ENCODE measurements at regions of chr12 and their contacts with region 1.

Region 1: GRCh38 chr12:121626087-121626852 is at the start of gene ORAI1:
- DNase-seq: peak; percentile 96
- H3K4me3 Mint-ChIP-seq: peak within 1 kb of the TSS; percentile 92
- H3K27ac Mint-ChIP-seq: peak within 1 kb of the TSS; percentile 95
- H3K4me1 Mint-ChIP-seq: peaks cover 49% of the 10 kb centered on the region
- H3K27me3 Mint-ChIP-seq: no peaks in the 10 kb centered on the region
- total RNA-seq, gene ORAI1: 61.5 and 67.0 TPM in 2 replicates

Region 2: DNA sequence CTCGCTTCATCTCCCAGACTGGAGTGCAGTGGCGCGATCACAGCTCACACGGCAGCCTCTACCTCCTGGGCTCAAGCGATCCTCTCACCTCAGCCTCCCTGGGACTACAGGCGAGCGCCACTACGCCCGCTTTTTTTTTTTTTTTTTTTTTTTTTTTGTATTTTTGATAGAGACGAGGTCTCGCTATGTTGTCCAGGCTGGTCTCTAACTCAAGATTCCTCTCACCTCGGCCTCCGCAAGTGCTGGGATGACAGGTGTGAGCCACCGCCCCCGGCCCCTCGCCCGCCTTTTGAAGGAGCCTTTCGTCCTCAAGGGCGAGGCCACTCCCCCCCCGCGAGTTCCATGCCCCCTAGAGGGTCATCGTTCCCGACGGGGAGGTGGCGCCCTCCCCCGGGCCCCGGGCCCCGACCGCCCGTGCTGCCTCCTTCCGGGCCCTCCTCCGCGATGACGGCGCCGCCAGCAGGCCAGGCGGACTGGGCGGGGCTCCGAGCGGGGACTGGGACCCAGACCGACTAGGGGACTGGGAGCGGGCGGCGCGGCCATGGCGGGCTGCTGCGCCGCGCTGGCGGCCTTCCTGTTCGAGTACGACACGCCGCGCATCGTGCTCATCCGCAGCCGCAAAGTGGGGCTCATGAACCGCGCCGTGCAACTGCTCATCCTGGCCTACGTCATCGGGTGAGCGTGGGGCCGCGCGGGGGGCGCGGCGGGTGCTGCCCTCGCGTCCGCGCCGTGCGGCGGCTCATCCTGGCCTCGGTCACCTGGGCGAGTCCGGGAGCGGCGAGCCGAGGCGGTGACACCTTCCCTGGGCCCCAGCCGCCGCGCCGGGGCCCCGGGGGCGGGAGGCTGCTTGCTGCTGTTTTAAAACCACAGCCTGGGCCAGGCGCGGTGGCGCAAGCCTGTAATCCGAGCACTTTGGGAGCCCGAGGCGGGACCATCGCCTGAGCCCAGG is 416.4 kb before region 1 on chr12 and contains the start of gene P2RX4:
- intact Hi-C with region 1: loop called (anchors 5 kb)
- DNase-seq: peak; percentile 87
- H3K4me3 Mint-ChIP-seq: peak within 1 kb of the TSS; percentile 85
- H3K27ac Mint-ChIP-seq: peak within 1 kb of the TSS; percentile 94
- H3K4me1 Mint-ChIP-seq: peaks cover 33% of the 10 kb centered on the region
- H3K27me3 Mint-ChIP-seq: peaks cover 1% of the 10 kb centered on the region
- total RNA-seq, gene P2RX4: 22.8 and 25.3 TPM in 2 replicates

Region 3: GRCh38 chr12:121467115-121467793 is 159.0 kb before region 1 on chr12:
- intact Hi-C with region 1: loop called (anchors 1 kb)
- DNase-seq: peak; percentile 88
- H3K4me3 Mint-ChIP-seq: no peak overlapping the region
- H3K27ac Mint-ChIP-seq: no peak overlapping the region
- H3K4me1 Mint-ChIP-seq: peaks cover 29% of the 10 kb centered on the region
- H3K27me3 Mint-ChIP-seq: peaks cover 8% of the 10 kb centered on the region

Region 4: DNA sequence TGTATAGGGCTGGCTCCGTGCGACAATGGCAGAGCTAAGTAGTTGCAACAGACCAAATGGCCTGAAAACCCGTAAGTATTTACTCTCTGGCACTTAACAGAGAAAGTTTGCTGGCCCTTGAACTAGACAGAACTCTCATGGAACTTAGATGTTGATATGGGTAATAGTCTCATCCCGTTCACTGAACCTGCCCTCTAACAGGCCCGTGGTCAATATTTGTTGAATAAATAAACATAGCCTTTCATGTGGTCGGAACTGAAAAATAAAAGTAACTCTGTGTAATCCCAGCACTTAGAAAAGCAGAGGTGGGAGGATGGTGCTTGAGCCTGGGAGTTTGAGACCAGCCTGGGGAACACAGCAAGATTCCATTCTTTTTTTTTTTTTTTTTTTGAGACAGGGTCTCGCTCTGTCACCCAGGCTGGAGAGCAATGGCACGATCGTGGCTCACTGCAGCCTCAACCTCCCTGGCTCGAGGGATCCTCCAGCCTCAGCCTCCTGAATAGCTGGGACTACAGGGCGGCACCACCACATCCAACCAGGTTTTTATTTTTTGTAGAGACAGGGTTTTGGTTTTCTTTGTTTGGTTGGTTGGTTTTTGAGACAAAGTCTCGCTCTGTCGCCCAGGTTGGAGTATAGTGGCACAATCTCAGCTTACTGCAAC is 75.2 kb before region 1 on chr12:
- intact Hi-C with region 1: loop called (anchors 1 kb)
- DNase-seq: no peak
- H3K4me3 Mint-ChIP-seq: no peak overlapping the region
- H3K27ac Mint-ChIP-seq: no peak overlapping the region
- H3K4me1 Mint-ChIP-seq: peaks cover 6% of the 10 kb centered on the region
- H3K27me3 Mint-ChIP-seq: no peaks in the 10 kb centered on the region

Region 5: GRCh38 chr12:121657305-121658008 is 31.2 kb after region 1 on chr12:
- intact Hi-C with region 1: loop called (anchors 1 kb)
- DNase-seq: peak; percentile 15
- H3K4me3 Mint-ChIP-seq: peak overlapping the region; percentile 26
- H3K27ac Mint-ChIP-seq: peak overlapping the region; percentile 71
- H3K4me1 Mint-ChIP-seq: peaks cover 57% of the 10 kb centered on the region
- H3K27me3 Mint-ChIP-seq: peaks cover 5% of the 10 kb centered on the region

Region 6: DNA sequence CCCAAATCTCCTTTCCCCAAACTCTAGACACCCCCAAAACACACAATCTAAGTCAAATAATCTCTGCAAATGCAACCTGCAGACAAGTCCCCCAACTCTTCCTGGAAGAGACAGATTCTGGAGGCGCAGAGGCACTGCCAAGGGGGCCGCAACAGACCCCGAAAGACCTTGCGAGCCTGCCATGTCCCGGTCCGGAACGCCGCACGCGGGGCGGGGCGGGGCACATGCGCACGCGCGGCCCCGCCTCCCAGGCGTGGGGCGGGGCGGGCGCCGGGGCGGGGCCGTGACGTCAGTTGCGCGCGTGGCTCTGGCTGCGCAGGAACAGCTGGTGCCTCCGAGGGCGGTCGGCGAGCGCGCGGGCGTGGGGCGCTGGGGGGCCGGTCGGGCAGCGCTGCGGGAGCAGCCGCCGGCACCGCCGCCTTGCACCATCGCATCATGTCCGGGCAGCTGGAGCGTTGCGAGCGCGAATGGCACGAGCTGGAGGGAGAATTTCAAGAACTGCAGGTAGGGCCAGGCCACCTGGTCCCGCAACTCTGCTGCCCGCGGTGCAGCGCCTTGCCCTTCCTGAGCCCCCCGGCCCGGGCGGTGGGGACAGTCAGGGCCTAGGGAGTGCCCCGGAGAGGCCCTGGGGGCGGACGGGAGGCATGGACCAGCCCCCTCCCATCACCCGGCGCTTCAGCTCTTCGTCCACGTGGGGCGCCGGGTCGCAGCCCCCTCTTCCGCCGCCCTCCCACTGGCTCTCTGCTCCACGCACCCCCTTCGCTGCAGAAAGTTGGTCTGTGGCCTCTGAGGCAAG is 86.4 kb after region 1 on chr12 and contains the start of gene TMEM120B:
- intact Hi-C with region 1: loop called (anchors 1 kb)
- DNase-seq: peak; percentile 83
- H3K4me3 Mint-ChIP-seq: peak within 1 kb of the TSS; percentile 97
- H3K27ac Mint-ChIP-seq: peak within 1 kb of the TSS; percentile 91
- H3K4me1 Mint-ChIP-seq: peaks cover 28% of the 10 kb centered on the region
- H3K27me3 Mint-ChIP-seq: peaks cover 4% of the 10 kb centered on the region
- total RNA-seq, gene TMEM120B: 17.5 and 18.3 TPM in 2 replicates

Region 7: GRCh38 chr12:122225683-122226407 is 599.6 kb after region 1 on chr12 and contains the start of gene DIABLO:
- intact Hi-C with region 1: loop called (anchors 1 kb)
- DNase-seq: peak; percentile 100
- H3K4me3 Mint-ChIP-seq: peak within 1 kb of the TSS; percentile 91
- H3K27ac Mint-ChIP-seq: peak within 1 kb of the TSS; percentile 90
- H3K4me1 Mint-ChIP-seq: peaks cover 32% of the 10 kb centered on the region
- H3K27me3 Mint-ChIP-seq: no peaks in the 10 kb centered on the region
- total RNA-seq, gene DIABLO: 58.1 and 59.2 TPM in 2 replicates

Measured in activated T-helper 1 cell treated with anti-CD3 and anti-CD28 coated beads, Interleukin-12 subunit alpha, Interleukin-12 subunit beta, Interleukin-2, Interleukin-4 antibody, amounts not matched to agents 30 ng/mL and 10 ng/mL and 1 ng/mL, durations not matched to agents 14 hours and 24 hours and 36 hours (primary cell).